Naive thymus-derived CD4-positive, alpha-beta T cell (primary cell): ENCODE measurements at regions of chr5 and their contacts with region 1.

Region 1: GRCh38 chr5:40834849-40835787 is at the start of gene RPL37:
- DNase-seq: peak; percentile 73 to 91 (median 88)
- ATAC-seq: peak; percentile 96
- H3K4me3 ChIP-seq: peak within 1 kb of the TSS; percentile 88
- H3K4me3 Mint-ChIP-seq: peak within 1 kb of the TSS; percentile 93 to 99 (median 98)
- H3K27ac ChIP-seq: peak within 1 kb of the TSS; percentile 92
- H3K27ac Mint-ChIP-seq: peak within 1 kb of the TSS; percentile 97 to 100 (median 99)
- H3K4me1 ChIP-seq: peaks cover 11 to 23% of the 10 kb centered on the region in 2 donors
- H3K4me1 Mint-ChIP-seq: peaks cover 21 to 58% (median 45%) of the 10 kb centered on the region in 7 donors
- H3K27me3 ChIP-seq: no peaks in the 10 kb centered on the region
- H3K27me3 Mint-ChIP-seq: no peaks in the 10 kb centered on the region
- total RNA-seq, gene RPL37: 1,642 to 2,808 (median 2,710) TPM

Region 2: DNA sequence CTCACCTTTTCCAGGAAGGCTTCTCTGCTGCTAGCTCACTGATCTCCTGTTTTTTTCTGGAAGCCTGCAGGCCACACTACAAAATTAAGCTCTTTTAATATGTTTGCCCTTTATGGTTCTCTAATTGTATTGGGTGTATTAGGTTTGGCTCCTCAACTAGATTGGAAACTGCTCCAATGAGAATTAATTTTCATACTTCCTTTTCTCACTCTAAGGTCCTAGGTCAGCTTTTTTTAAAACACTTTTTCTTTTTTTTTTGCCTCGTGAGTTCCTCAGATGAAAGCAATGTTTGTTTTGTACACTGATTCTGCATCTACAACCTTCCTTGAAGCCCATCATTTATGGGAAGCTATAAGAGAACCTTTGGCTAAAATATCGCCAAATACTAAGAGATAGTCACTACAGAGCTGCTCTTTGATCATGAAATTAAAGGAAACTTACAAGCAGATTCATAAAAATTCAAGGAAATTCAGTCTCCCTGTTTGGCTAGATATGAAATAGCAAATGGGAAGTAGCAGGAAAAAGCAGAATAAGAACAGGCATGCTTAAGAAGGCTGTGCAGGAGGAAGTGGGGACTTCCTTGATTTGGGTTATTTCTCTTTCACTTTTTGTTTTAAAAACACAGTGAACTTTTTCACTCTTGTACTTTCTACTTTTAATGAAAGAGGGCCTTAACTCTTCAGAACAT is 1560.6 kb before region 1 on chr5:
- CTCF ChIA-PET with region 1: no interaction called
- POLR2A ChIA-PET with region 1: no interaction called
- intact Hi-C with region 1: loop called in 1 of 2 experiments (anchors 5 kb)
- DNase-seq: peak in 7 of 9 donors; percentile 29 to 52 (median 46)
- ATAC-seq: peak; percentile 68
- H3K4me3 ChIP-seq: peak overlapping the region; percentile 59
- H3K4me3 Mint-ChIP-seq: peak overlapping the region; percentile 63 to 88 (median 85)
- H3K27ac ChIP-seq: peak overlapping the region; percentile 74
- H3K27ac Mint-ChIP-seq: peak overlapping the region; percentile 92 to 98 (median 96)
- H3K4me1 ChIP-seq: peaks cover 34 to 49% of the 10 kb centered on the region in 2 donors
- H3K4me1 Mint-ChIP-seq: peaks cover 25 to 67% (median 47%) of the 10 kb centered on the region in 7 donors
- H3K27me3 ChIP-seq: no peaks in the 10 kb centered on the region
- H3K27me3 Mint-ChIP-seq: no peaks in the 10 kb centered on the region

Region 3: GRCh38 chr5:40798012-40798855 is 36.9 kb before region 1 on chr5 and contains the start of gene PRKAA1:
- CTCF ChIA-PET with region 1: interaction called, 3 read pairs
- POLR2A ChIA-PET with region 1: interaction called, 4 read pairs
- intact Hi-C with region 1: loop called (anchors 1 kb)
- DNase-seq: peak; percentile 86 to 92 (median 91)
- ATAC-seq: peak; percentile 98
- H3K4me3 ChIP-seq: peak within 1 kb of the TSS; percentile 98
- H3K4me3 Mint-ChIP-seq: peak within 1 kb of the TSS; percentile 86 to 96 (median 94)
- H3K27ac ChIP-seq: peak within 1 kb of the TSS; percentile 91
- H3K27ac Mint-ChIP-seq: peak within 1 kb of the TSS; percentile 74 to 96 (median 94)
- H3K4me1 ChIP-seq: peaks cover 12 to 16% of the 10 kb centered on the region in 2 donors
- H3K4me1 Mint-ChIP-seq: peaks cover 28 to 55% (median 44%) of the 10 kb centered on the region in 7 donors
- H3K27me3 ChIP-seq: no peaks in the 10 kb centered on the region
- H3K27me3 Mint-ChIP-seq: peaks cover 0 to 17% (median 0%) of the 10 kb centered on the region in 5 donors
- total RNA-seq, gene PRKAA1: 65.5 to 103 (median 98.1) TPM

Region 4: GRCh38 chr5:40879163-40879942 is 44.2 kb after region 1 on chr5:
- CTCF ChIA-PET with region 1: no interaction called
- POLR2A ChIA-PET with region 1: no interaction called
- intact Hi-C with region 1: loop called (anchors 1 to 2 kb)
- DNase-seq: peak in 5 of 9 donors; percentile 23 to 39 (median 29)
- ATAC-seq: peak; percentile 45
- H3K4me3 ChIP-seq: no peak overlapping the region
- H3K4me3 Mint-ChIP-seq: no peak overlapping the region
- H3K27ac ChIP-seq: no peak overlapping the region
- H3K27ac Mint-ChIP-seq: no peak overlapping the region
- H3K4me1 ChIP-seq: no peaks in the 10 kb centered on the region
- H3K4me1 Mint-ChIP-seq: peaks cover 0 to 5% (median 0%) of the 10 kb centered on the region in 7 donors
- H3K27me3 ChIP-seq: no peaks in the 10 kb centered on the region
- H3K27me3 Mint-ChIP-seq: peaks cover 0 to 9% (median 0%) of the 10 kb centered on the region in 5 donors

Region 5: DNA sequence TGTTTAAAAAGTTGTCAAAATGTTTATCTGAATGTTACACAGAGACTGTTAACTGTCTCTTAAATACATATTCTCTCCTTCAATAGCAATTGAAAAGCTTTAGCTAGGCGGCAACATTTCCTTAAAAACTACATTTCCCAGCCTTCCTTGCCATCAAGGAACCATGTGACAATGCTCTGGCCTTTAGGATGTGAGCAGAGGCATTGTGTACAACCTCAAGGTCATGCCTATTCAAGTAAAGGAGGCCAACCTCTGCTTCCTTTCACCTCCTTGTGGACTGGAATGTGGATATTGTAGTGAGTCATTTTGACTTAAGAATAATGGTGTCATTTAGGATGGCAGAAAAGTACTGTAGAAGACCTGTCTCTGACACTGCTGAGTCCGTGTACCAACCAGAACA is 259.8 kb after region 1 on chr5:
- CTCF ChIA-PET with region 1: no interaction called
- POLR2A ChIA-PET with region 1: no interaction called
- intact Hi-C with region 1: no loop called
- DNase-seq: no peak
- ATAC-seq: no peak
- H3K4me3 ChIP-seq: no peak overlapping the region
- H3K4me3 Mint-ChIP-seq: no peak overlapping the region
- H3K27ac ChIP-seq: no peak overlapping the region
- H3K27ac Mint-ChIP-seq: no peak overlapping the region
- H3K4me1 ChIP-seq: no peaks in the 10 kb centered on the region
- H3K4me1 Mint-ChIP-seq: no peaks in the 10 kb centered on the region
- H3K27me3 ChIP-seq: no peaks in the 10 kb centered on the region
- H3K27me3 Mint-ChIP-seq: no peaks in the 10 kb centered on the region

Region 6: GRCh38 chr5:41869739-41870626 is 1034.9 kb after region 1 on chr5 and contains the start of gene OXCT1:
- CTCF ChIA-PET with region 1: no interaction called
- POLR2A ChIA-PET with region 1: interaction called, 3 read pairs
- intact Hi-C with region 1: loop called in 1 of 2 experiments (anchors 1 kb)
- DNase-seq: peak; percentile 88 to 96 (median 95)
- ATAC-seq: peak; percentile 97
- H3K4me3 ChIP-seq: peak within 1 kb of the TSS; percentile 91
- H3K4me3 Mint-ChIP-seq: peak within 1 kb of the TSS; percentile 85 to 94 (median 90)
- H3K27ac ChIP-seq: peak within 1 kb of the TSS; percentile 97
- H3K27ac Mint-ChIP-seq: peak within 1 kb of the TSS; percentile 89 to 98 (median 97)
- H3K4me1 ChIP-seq: peaks cover 16% of the 10 kb centered on the region in 2 donors
- H3K4me1 Mint-ChIP-seq: peaks cover 18 to 63% (median 57%) of the 10 kb centered on the region in 7 donors
- H3K27me3 ChIP-seq: no peaks in the 10 kb centered on the region
- H3K27me3 Mint-ChIP-seq: no peaks in the 10 kb centered on the region
- total RNA-seq, gene OXCT1: 18.6 to 53.1 (median 30.0) TPM

Region 7: DNA sequence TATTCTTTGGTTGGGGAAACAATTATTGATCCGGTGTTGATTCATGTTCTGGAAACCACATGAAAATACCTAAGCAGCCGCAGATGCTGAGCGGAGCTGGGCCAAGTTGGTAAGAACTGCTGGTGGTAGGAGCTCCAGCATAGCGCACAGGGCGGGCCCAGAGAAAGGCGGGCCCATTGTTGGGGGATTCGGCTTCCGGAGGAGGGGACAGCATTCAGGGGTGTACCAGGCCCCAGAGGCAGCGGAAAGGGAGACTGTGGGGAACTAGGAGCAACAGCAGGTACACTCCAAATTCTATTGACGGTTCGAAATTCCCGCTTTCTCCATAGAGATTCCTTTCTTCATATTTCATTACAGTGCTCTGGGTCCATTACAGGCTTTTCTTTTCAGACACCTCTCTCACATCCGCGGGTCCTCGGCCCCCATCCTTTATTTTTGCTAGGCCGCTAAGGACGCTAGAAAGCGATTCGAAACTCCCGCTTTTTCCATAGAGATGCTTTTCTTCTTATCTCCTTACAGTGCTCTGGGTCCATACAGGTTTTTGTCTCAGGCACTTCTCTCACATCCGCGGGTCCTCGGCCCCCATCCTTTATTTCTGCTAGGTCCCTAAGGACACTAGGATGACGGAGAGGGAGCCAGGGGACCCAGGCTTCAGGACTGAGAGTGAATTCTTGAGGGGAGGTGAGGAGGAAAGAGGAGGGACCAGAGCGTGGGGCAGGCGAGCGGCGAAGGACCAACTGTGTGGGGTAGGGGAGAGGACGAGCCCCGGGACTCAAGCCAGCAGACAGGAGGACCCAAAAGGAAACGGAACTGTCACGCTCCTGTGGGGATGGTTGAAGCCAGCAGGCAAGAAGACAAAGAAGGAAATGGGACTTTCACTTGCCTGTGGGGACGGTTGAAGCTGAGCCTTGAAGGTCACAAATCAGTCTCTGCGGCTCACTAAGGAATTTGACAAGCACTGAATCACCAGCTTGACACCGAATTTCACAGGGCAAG is 1921.8 kb after region 1 on chr5 and contains the start of gene CCDC152:
- CTCF ChIA-PET with region 1: no interaction called
- POLR2A ChIA-PET with region 1: no interaction called
- intact Hi-C with region 1: loop called in 1 of 2 experiments (anchors 5 kb)
- DNase-seq: peak; percentile 11 to 55 (median 41)
- ATAC-seq: peak; percentile 94
- H3K4me3 ChIP-seq: peak within 1 kb of the TSS; percentile 49
- H3K4me3 Mint-ChIP-seq: peak within 1 kb of the TSS; percentile 71 to 92 (median 86)
- H3K27ac ChIP-seq: peak within 1 kb of the TSS; percentile 36
- H3K27ac Mint-ChIP-seq: peak within 1 kb of the TSS; percentile 14 to 81 (median 34)
- H3K4me1 ChIP-seq: no peaks in the 10 kb centered on the region
- H3K4me1 Mint-ChIP-seq: peaks cover 9 to 17% (median 11%) of the 10 kb centered on the region in 7 donors
- H3K27me3 ChIP-seq: no peaks in the 10 kb centered on the region
- H3K27me3 Mint-ChIP-seq: peaks cover 7 to 21% (median 10%) of the 10 kb centered on the region in 5 donors
- total RNA-seq, gene CCDC152: 1.7 to 6.1 (median 3.4) TPM